ENCODE measurements at regions of chr15 and their contacts with region 1.

Region 1: GRCh38 chr15:69058830-69059556 is 44.5 kb downstream of the NOX5 start:
- H3K4me3 Mint-ChIP-seq: no peak overlapping the region
- H3K27ac Mint-ChIP-seq: peak overlapping the region; percentile 30
- H3K4me1 Mint-ChIP-seq: peaks cover 6% of the 10 kb centered on the region
- H3K27me3 Mint-ChIP-seq: peaks cover 17% of the 10 kb centered on the region

Region 2: DNA sequence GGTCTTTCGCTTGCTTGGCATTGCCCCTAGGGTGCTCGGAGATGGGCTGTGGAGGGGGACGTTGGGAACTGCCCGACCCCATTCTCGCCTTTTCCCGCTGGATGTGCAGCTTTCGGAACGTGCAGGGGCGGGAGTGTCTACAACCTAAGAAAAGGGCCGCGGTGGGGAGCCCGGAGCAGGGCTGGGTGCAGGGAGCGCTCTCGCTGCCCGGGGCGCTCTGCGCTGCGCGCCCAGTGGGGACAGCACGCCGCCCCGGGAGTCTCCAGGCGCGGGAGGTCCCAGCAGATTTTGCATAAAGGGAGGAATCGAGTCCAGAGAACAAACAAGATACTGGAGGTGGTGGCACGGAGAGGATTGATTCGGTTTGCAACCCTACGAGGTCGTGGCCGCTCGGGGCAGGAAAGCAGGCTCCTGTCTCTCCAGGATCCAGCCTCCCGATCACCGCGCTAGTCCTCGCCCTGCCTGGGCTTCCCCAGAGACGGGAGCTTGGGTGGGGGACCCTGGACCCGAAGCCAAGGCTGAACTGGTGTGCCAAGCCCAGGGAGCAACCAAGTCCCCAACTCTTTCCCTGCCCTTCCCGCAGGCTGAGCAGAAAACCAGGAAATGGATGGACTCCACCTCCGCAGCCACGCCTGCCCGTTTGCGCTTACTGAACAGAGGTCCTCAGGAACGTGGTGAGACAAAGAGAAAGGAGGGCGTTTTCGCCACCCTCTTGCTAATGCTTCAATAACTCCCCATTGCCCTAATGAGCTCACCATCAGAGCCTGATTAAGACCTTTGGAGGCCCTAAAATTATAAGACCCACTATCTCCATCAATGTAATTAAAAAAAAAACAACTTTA is 15.2 kb after region 1 on chr15:
- intact Hi-C with region 1: no loop called
- H3K4me3 Mint-ChIP-seq: peak overlapping the region; percentile 76
- H3K27ac Mint-ChIP-seq: no peak overlapping the region
- H3K4me1 Mint-ChIP-seq: peaks cover 19% of the 10 kb centered on the region
- H3K27me3 Mint-ChIP-seq: peaks cover 39% of the 10 kb centered on the region

Region 3: DNA sequence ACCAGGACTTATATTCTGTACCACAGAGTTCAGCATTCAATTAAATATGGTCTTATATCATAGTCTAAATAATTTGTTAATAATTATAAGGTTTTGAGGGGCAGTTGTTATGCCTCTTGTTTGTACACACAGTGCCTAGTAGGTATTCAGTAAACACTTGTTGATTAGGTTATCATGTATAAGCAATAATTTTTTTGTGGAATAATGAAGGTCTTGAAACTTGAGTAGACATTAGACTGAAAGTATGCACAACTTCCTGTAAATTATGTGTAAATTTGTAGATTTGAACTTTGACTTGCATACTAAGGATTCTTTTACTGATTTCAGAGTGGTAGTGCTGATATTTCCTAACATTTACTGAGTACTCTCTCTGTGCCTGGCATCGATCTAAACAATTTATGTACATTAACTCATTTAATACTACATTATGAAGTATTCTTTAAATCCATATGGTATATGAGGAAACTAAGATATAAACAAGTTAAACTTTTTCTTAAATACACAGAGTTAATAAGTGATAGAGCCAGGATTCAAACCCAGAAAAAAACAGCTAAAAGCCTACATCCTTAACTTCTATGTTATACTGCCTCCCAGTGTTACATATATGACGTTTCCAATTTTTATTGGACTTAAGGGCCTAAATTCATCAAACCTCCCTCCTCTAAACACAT is 166.5 kb after region 1 on chr15:
- intact Hi-C with region 1: loop called (anchors 1 kb)
- H3K4me3 Mint-ChIP-seq: no peak overlapping the region
- H3K27ac Mint-ChIP-seq: no peak overlapping the region
- H3K4me1 Mint-ChIP-seq: peaks cover 5% of the 10 kb centered on the region
- H3K27me3 Mint-ChIP-seq: no peaks in the 10 kb centered on the region

Region 4: GRCh38 chr15:69394556-69395282 is 335.7 kb after region 1 on chr15:
- intact Hi-C with region 1: loop called (anchors 1 kb)
- H3K4me3 Mint-ChIP-seq: no peak overlapping the region
- H3K27ac Mint-ChIP-seq: no peak overlapping the region
- H3K4me1 Mint-ChIP-seq: peaks cover 22% of the 10 kb centered on the region
- H3K27me3 Mint-ChIP-seq: peaks cover 9% of the 10 kb centered on the region